ENCODE measurements at regions of chr7 and their contacts with region 1.

Region 1: GRCh38 chr7:75711656-75712514 is 26.9 kb downstream of the HIP1 start:
- DNase-seq: no peak
- H3K4me3 ChIP-seq: no peak overlapping the region
- H3K27ac ChIP-seq: no peak overlapping the region
- H3K4me1 ChIP-seq: no peaks in the 10 kb centered on the region
- H3K27me3 ChIP-seq: no peaks in the 10 kb centered on the region
- CTCF ChIP-seq: no peak

Region 2: GRCh38 chr7:75679060-75679459 is 32.8 kb before region 1 on chr7:
- CTCF ChIA-PET with region 1: no interaction called
- dilution Hi-C with region 1: no loop called
- in situ Hi-C with region 1: no loop called
- intact Hi-C with region 1: loop called (anchors 5 kb)
- DNase-seq: no peak
- H3K4me3 ChIP-seq: no peak overlapping the region
- H3K27ac ChIP-seq: no peak overlapping the region
- H3K4me1 ChIP-seq: no peaks in the 10 kb centered on the region
- H3K27me3 ChIP-seq: no peaks in the 10 kb centered on the region
- CTCF ChIP-seq: no peak

Region 3: DNA sequence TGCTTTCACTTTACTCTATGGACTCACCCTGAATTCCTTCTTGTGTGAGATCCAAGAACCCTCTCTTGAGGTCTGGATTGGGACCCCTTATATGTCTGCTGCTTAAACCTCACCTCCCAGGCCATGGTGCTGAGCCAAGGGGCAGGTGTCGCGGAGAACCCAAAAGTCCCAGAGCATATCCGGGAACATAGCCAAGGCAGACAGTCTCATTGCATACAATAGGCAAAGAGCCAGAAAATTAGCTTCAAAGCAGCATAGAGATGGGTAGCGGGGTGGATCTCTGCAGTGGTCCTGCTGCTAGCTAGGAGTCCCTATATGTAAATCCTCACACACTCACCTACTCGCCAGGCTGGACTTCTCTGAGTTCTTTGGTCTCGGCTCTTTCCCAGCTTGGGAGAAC is 96.2 kb after region 1 on chr7:
- CTCF ChIA-PET with region 1: no interaction called
- dilution Hi-C with region 1: no loop called
- in situ Hi-C with region 1: no loop called
- intact Hi-C with region 1: no loop called
- DNase-seq: no peak
- H3K4me3 ChIP-seq: no peak overlapping the region
- H3K27ac ChIP-seq: no peak overlapping the region
- H3K4me1 ChIP-seq: no peaks in the 10 kb centered on the region
- H3K27me3 ChIP-seq: no peaks in the 10 kb centered on the region
- CTCF ChIP-seq: no peak